Dorsolateral prefrontal cortex (tissue), 120 donors: ENCODE measurements at regions of chr2 and their contacts with region 1.

Region 1: GRCh38 chr2:32168513-32168912 is 2.8 kb downstream of the SLC30A6 start:
- DNase-seq: no peak
- H3K4me3 ChIP-seq: no peak overlapping the region
- H3K27ac ChIP-seq: no peak overlapping the region
- H3K27me3 ChIP-seq: no peaks in the 10 kb centered on the region
- CTCF ChIP-seq: no peak

Region 2: DNA sequence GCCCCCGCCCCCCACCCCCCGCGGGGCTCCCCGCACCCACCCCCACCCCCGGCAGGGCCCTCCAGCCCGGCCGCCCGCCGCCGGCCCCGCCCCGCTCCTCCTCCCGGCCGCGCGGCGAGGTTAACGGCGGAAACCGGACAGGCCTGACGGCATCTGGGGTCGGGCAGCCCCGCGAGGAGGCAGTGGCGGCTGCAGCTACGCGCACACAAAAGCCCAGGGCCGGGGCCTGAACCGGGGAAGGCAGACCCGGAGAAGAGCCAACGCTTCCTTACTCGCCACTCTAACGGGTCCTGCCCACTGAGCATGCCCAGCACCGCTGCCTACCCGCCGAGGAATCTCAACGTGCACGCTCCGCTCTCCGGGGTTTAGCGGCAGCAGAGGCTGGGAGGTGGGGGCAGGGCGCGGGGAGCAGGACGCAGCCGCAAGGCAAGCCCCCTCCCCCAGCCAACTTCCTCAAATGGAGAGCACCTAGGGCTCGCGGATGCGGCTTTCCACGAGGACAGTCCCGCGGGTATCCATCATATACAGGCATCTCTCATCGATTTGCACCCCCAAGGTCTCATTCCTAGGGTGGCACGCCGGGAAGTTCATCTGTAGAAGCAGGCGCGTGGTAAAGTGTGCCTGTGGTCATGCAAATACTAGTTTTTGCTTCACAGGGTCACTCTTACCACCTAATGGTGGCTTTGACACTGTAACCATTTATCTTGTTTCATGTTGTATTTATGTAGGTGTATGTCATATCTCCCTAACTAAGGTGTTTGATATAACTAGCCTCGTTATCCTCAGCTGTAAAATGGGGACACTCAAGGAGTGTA is 157.6 kb before region 1 on chr2 and contains the start of gene MEMO1:
- intact Hi-C with region 1: loop called in 1 of 2 experiments (anchors 10 kb)
- DNase-seq: peak; percentile 84 to 93 (median 90)
- H3K4me3 ChIP-seq: peak within 1 kb of the TSS; percentile 54 to 97 (median 85)
- H3K27ac ChIP-seq: peak within 1 kb of the TSS; percentile 18 to 97 (median 94)
- H3K27me3 ChIP-seq: no peaks in the 10 kb centered on the region
- CTCF ChIP-seq: peak in 6 of 56 donors; percentile 8 to 25 (median 15)
- total RNA-seq, gene MEMO1: 35.6 to 60.5 (median 46.8) TPM

Region 3: GRCh38 chr2:32246911-32247310 is 78.4 kb after region 1 on chr2:
- intact Hi-C with region 1: no loop called
- DNase-seq: no peak
- H3K4me3 ChIP-seq: no peak overlapping the region
- H3K27ac ChIP-seq: no peak overlapping the region
- H3K27me3 ChIP-seq: no peaks in the 10 kb centered on the region
- CTCF ChIP-seq: no peak

Region 4: GRCh38 chr2:32260376-32260775 is 91.9 kb after region 1 on chr2:
- intact Hi-C with region 1: no loop called
- DNase-seq: no peak
- H3K4me3 ChIP-seq: no peak overlapping the region
- H3K27ac ChIP-seq: no peak overlapping the region
- H3K27me3 ChIP-seq: peaks cover 0 to under 1% (median 0%) of the 10 kb centered on the region in 45 donors
- CTCF ChIP-seq: no peak

Region 5: DNA sequence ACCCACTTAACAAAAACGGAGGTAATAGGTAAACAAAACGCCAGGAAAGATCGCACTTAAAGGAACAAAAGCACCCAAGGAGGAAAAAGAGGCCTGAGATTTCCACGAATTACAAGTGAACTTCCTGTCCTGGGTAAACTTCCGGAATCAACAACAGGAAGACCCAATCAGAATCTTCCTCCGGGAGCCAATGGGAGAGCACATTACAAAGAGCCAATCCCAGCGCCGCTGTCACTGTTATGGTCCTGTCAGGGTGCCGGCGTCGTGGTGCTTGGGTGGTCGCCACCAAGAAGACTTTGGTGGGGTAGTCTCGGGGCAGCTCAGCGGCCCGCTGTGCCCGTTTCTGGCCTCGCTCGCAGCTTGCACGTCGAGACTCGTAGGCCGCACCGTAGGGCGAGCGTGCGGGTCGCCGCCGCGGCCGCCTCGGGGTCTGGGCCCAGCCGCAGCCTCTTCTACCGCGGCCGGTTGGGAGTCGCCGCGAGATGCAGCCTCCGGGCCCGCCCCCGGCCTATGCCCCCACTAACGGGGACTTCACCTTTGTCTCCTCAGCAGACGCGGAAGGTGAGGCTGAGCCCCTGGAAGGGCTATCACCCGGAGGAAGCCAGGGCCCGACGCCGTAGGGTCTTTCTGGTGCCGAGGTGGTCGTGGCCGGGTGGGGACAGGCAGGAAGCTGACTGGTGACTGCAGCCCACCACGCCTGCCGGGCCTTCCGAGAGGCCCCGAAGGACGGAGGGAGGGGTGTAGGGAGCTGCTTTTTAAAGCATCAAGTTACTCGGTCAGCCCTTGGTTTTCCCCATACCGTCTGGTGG is 109.4 kb after region 1 on chr2 and contains the start of gene YIPF4:
- intact Hi-C with region 1: loop called (anchors 1 to 5 kb)
- DNase-seq: peak; percentile 74 to 93 (median 86)
- H3K4me3 ChIP-seq: peak within 1 kb of the TSS; percentile 68 to 100 (median 96)
- H3K27ac ChIP-seq: peak within 1 kb of the TSS; percentile 63 to 94 (median 84)
- H3K27me3 ChIP-seq: peaks cover 0 to 8% (median 0%) of the 10 kb centered on the region in 45 donors
- CTCF ChIP-seq: peak in 6 of 56 donors; percentile 4 to 17 (median 7)
- total RNA-seq, gene YIPF4: 30.3 to 73.0 (median 46.0) TPM

Region 6: DNA sequence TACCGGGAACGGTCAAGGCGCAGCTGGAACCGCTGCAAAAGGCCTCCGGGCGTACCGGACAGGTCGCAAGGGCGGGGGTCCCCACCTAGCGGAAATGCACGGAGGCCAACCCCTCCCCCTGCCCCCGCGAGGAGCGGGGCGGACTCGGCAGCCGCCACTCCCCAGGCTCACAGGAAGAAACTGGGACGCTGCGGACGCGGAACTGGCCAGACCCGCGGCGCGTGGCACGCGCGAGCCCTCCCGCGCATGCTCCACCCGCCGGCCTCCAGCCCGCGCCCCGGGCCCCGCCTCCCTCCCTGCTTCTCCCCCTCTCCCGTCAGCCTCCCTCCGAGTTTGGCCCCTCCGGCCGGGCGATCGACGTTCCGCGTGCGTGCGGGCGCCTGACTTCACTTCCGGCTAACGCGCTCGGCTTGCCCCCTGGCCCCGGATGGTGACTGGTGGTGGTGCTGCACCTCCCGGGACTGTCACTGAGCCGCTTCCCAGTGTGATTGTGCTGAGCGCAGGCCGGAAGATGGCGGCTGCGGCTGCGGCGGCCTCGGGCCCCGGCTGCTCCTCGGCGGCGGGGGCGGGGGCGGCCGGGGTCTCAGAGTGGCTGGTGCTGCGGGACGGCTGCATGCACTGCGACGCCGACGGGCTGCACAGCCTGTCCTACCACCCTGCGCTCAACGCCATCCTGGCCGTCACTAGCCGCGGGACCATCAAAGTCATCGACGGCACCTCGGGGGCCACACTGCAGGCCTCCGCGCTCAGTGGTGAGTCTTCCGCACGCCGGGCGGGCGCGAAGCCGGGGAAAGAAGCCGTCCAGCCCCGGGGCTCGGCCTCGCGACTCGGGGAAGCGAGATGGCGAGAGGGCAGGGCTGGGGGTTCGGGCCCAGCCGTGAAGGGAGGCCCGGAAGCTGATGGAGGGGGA is 188.5 kb after region 1 on chr2 and contains the start of gene BIRC6:
- intact Hi-C with region 1: loop called (anchors 2 to 5 kb)
- DNase-seq: peak; percentile 96 to 100 (median 98)
- H3K4me3 ChIP-seq: peak within 1 kb of the TSS; percentile 73 to 100 (median 98)
- H3K27ac ChIP-seq: peak within 1 kb of the TSS; percentile 68 to 98 (median 94)
- H3K27me3 ChIP-seq: no peaks in the 10 kb centered on the region
- CTCF ChIP-seq: peak in 28 of 56 donors; percentile 4 to 50 (median 27)
- total RNA-seq, gene BIRC6: 104 to 180 (median 140) TPM